Gastrocnemius medialis (tissue), 4 donors: ENCODE measurements at regions of chr1 and their contacts with region 1.

Region 1: GRCh38 chr1:176843352-176844297 is 320.9 kb downstream of the ASTN1 start:
- DNase-seq: no peak
- ATAC-seq: peak; percentile 56 to 57
- H3K4me3 ChIP-seq: no peak overlapping the region
- H3K27ac ChIP-seq: no peak overlapping the region
- H3K4me1 ChIP-seq: no peaks in the 10 kb centered on the region
- H3K27me3 ChIP-seq: no peaks in the 10 kb centered on the region
- CTCF ChIP-seq: peak; percentile 58 to 77 (median 67)
- POLR2A ChIP-seq: no peak

Region 2: DNA sequence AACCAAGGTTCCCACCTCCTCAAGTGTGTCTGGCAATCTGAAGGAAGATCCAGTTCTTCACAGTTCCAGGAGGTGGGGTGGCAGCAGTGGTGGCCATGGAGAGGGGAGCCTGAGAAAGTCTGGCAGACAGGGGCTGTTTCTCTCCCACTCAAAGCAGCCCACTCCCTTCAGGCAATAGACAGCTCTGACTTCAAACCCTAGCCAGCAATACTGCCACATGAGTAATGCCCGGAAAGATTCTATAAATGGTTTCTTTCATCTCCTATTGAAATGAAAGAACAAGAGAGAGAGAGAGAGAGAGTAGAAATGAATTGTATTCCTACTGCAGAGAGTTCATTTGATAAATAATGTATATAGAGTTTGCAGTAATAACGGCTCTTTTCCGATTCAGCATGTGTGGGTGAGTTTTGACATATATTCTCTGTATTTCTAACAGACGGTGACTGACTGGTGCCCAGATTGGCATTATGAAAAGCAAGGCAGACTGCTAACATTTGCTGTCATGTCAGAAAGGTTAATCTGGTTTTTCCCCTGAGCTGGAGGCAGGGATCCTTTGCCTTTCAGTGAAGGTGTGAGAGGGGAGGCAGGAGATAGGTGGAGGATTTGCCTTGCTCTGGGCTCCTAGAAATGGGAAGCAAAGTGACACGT is 1383.9 kb before region 1 on chr1:
- in situ Hi-C with region 1: no loop called
- intact Hi-C with region 1: no loop called
- DNase-seq: no peak
- ATAC-seq: no peak
- H3K4me3 ChIP-seq: no peak overlapping the region
- H3K27ac ChIP-seq: no peak overlapping the region
- H3K4me1 ChIP-seq: no peaks in the 10 kb centered on the region
- H3K27me3 ChIP-seq: no peaks in the 10 kb centered on the region
- CTCF ChIP-seq: no peak
- POLR2A ChIP-seq: no peak

Region 3: DNA sequence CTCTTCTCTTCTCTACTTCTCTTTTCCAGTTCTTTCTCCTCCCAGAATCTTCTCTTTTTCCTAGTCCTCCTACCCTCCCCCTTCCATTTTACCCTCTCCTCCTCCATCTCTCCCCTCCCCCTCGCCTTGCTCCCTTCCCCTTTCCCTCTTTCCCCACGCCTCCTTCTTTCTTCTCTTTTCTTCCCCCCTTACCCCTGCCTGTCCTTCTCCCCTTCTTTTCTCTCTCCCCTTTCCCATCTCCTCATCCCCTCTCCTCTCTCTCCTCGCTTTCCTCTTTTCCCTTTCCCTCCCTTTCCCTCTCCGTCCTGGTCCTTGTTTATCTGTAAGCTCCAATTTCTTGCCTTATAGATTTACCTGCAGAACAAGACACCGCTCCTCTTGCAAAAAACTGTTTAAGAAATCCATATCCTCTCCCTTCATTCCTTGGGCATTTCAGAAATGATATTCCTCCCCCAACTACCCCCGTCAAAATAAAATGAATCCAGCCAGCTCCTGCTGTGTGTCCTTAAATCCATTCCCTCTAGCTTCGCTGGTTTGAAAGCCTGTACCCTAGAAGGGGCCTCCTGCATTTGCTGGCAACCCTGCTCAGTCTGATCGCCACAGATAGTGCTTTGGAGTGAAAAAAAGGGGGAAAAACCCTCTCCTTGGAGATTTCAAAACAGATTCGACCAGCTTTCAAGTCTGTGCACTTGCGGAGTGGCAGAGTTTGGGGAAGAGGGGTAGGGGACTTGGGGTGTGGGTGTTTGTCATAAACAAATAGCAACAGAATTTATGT is 291.2 kb before region 1 on chr1:
- in situ Hi-C with region 1: loop called in 3 of 4 experiments (anchors 5 to 10 kb)
- intact Hi-C with region 1: no loop called
- DNase-seq: no peak
- ATAC-seq: no peak
- H3K4me3 ChIP-seq: no peak overlapping the region
- H3K27ac ChIP-seq: no peak overlapping the region
- H3K4me1 ChIP-seq: no peaks in the 10 kb centered on the region
- H3K27me3 ChIP-seq: peaks cover 11 to 38% (median 12%) of the 10 kb centered on the region in 3 donors
- CTCF ChIP-seq: no peak
- POLR2A ChIP-seq: no peak